Heart left ventricle (tissue), 16 donors: ENCODE measurements at regions of chr14 and their contacts with region 1.

Region 1: GRCh38 chr14:21352587-21352986 is 31.2 kb downstream of the SUPT16H start:
- DNase-seq: peak in 3 of 5 donors; percentile 24 to 37 (median 31)
- ATAC-seq: peak in 2 of 4 donors; percentile 45 to 67
- H3K4me3 ChIP-seq: no peak overlapping the region
- H3K27ac ChIP-seq: peak overlapping the region in 1 of 12 donors; percentile 78
- H3K4me1 ChIP-seq: peaks cover 0 to 6% (median 0%) of the 10 kb centered on the region in 12 donors
- H3K27me3 ChIP-seq: no peaks in the 10 kb centered on the region
- CTCF ChIP-seq: no peak
- POLR2A ChIP-seq: no peak

Region 2: DNA sequence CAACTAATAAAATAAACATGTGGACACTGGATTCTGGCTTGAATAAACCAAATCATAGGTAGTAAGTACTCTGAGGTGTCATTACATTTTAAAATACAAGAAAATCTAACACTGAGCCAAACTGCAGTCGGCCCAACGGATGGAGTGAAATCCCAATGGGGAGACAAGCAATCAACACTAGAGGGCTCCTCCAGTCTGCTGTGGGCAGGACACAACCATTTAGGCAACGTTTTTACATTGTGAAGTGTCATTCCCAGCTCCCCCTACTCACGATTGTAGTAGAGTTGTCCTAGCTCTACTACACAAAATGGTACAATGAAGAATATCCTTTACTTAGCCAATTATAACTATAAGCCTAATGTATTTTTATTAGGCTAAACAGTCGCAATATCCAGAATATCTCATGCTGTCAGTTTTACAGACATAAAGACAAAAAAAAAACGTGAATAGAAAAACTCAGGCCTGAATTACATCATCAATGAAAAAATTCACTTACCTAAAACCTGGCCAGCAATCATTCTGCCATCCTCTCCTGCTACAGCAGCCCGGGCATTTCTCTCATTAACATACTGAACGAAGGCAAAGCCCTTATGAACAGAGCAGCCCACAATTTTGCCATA is 119.0 kb before region 1 on chr14:
- intact Hi-C with region 1: loop called in 1 of 10 experiments (anchors 10 kb)
- DNase-seq: no peak
- ATAC-seq: peak in 3 of 4 donors; percentile 38 to 55 (median 53)
- H3K4me3 ChIP-seq: no peak overlapping the region
- H3K27ac ChIP-seq: no peak overlapping the region
- H3K4me1 ChIP-seq: peaks cover 0 to 97% (median 63%) of the 10 kb centered on the region in 12 donors
- H3K27me3 ChIP-seq: no peaks in the 10 kb centered on the region
- CTCF ChIP-seq: peak in 9 of 12 donors; percentile 28 to 51 (median 36)
- POLR2A ChIP-seq: no peak

Region 3: GRCh38 chr14:21308479-21309237 is 43.9 kb before region 1 on chr14:
- intact Hi-C with region 1: no loop called
- DNase-seq: peak; percentile 59 to 81 (median 70)
- ATAC-seq: peak; percentile 89 to 93 (median 93)
- H3K4me3 ChIP-seq: peak overlapping the region in 10 of 12 donors; percentile 2 to 57 (median 45)
- H3K27ac ChIP-seq: peak overlapping the region; percentile 11 to 81 (median 65)
- H3K4me1 ChIP-seq: peaks cover 0 to 11% (median 0%) of the 10 kb centered on the region in 12 donors
- H3K27me3 ChIP-seq: no peaks in the 10 kb centered on the region
- CTCF ChIP-seq: no peak
- POLR2A ChIP-seq: peak in 1 of 2 donors; percentile 56

Region 4: GRCh38 chr14:21395444-21395843 is 42.9 kb after region 1 on chr14:
- intact Hi-C with region 1: loop called in 3 of 10 experiments (anchors 5 to 10 kb)
- DNase-seq: no peak
- ATAC-seq: no peak
- H3K4me3 ChIP-seq: no peak overlapping the region
- H3K27ac ChIP-seq: no peak overlapping the region
- H3K4me1 ChIP-seq: no peaks in the 10 kb centered on the region
- H3K27me3 ChIP-seq: no peaks in the 10 kb centered on the region
- CTCF ChIP-seq: no peak
- POLR2A ChIP-seq: no peak

Region 5: DNA sequence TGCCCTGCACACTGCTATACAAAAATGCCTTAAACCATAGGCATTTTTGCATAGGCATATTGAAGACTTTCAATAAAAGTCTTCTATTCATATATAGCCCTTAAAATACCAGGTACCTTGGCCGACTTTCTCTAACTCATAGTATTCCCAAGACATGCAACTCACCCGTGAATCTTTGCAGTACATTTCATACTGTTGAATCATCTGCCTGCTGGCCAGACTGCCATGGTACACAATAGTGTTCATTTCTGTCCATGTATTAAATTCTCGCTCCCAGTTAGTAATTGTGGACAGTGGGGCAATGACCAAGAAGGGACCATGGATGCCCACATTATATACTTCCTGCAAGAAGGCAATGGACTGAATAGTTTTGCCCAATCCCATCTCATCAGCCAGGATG is 55.6 kb after region 1 on chr14:
- intact Hi-C with region 1: loop called in 1 of 10 experiments (anchors 10 kb)
- DNase-seq: no peak
- ATAC-seq: no peak
- H3K4me3 ChIP-seq: no peak overlapping the region
- H3K27ac ChIP-seq: no peak overlapping the region
- H3K4me1 ChIP-seq: no peaks in the 10 kb centered on the region
- H3K27me3 ChIP-seq: no peaks in the 10 kb centered on the region
- CTCF ChIP-seq: no peak
- POLR2A ChIP-seq: no peak

Region 6: DNA sequence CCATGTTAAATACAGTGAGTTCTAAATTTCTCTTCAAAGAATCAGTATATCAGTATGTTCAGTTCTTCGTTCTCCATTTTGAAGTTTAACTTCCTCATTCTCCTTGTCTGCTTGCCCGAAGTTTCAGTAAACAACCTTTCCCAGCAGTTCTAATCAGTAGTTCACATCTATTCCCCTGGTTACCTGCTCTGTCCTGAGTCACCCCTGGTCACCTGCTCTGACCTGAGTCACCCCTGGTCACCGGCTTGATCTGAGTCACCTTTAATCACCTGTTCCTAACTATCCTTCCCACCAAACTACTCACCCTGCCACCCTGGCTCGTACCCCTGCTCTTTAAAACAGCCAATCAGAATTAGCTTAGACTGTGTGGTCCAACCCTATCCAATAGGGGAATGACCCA is 236.7 kb after region 1 on chr14:
- intact Hi-C with region 1: no loop called
- DNase-seq: no peak
- ATAC-seq: no peak
- H3K4me3 ChIP-seq: no peak overlapping the region
- H3K27ac ChIP-seq: no peak overlapping the region
- H3K4me1 ChIP-seq: no peaks in the 10 kb centered on the region
- H3K27me3 ChIP-seq: peaks cover 0 to 4% (median 0%) of the 10 kb centered on the region in 9 donors
- CTCF ChIP-seq: no peak
- POLR2A ChIP-seq: no peak

Region 7: GRCh38 chr14:21612324-21612723 is 259.7 kb after region 1 on chr14:
- intact Hi-C with region 1: no loop called
- DNase-seq: no peak
- ATAC-seq: no peak
- H3K4me3 ChIP-seq: no peak overlapping the region
- H3K27ac ChIP-seq: no peak overlapping the region
- H3K4me1 ChIP-seq: no peaks in the 10 kb centered on the region
- H3K27me3 ChIP-seq: no peaks in the 10 kb centered on the region
- CTCF ChIP-seq: no peak
- POLR2A ChIP-seq: no peak